ENCODE measurements at regions of chr20 and their contacts with region 1.

Region 1: GRCh38 chr20:47272893-47273590 is 83.5 kb downstream of the ZMYND8 start:
- DNase-seq: peak; percentile 7 to 57
- H3K4me3 ChIP-seq: no peak overlapping the region
- H3K27ac ChIP-seq: no peak overlapping the region
- H3K4me1 ChIP-seq: peaks cover 0 to 2% (median 0%) of the 10 kb centered on the region in 4 experiments; a peak in 1 of 7 replicates
- H3K27me3 ChIP-seq: no peaks in the 10 kb centered on the region
- CTCF ChIP-seq: peak in 2 of 3 experiments; percentile 72 to 80; a peak in 3 of 4 replicates
- EP300 ChIP-seq: no peak
- POLR2A ChIP-seq: no peak
- RAD21 ChIP-seq: peak; percentile 89 to 91

Region 2: DNA sequence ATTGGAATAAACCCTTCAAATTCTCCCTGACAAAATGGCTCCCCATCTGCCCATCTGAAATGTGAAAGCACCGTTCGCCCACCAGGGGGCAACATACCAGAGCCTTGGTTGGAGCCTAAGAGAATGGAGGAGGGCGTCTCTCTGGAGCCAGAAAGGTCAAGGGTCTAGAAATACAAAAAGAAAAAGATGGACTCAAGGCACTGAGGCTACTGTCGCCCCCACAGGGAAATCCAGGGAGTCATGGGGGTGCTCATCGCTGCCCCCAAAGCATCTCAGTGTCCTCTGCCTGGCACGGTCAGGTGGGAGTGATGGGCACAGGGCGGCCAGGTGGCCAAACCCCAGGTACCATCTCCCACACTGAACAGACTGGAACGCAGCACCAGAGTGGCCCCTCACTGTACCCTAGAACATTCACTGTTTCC is 52.9 kb before region 1 on chr20:
- CTCF ChIA-PET with region 1: interaction called, 11 read pairs
- POLR2A ChIA-PET with region 1: no interaction called
- DNase-seq: peak in 1 of 2 experiments; percentile 84
- H3K4me3 ChIP-seq: no peak overlapping the region
- H3K27ac ChIP-seq: no peak overlapping the region
- H3K4me1 ChIP-seq: no peaks in the 10 kb centered on the region
- H3K27me3 ChIP-seq: no peaks in the 10 kb centered on the region
- CTCF ChIP-seq: peak; percentile 61 to 74 (median 66)
- EP300 ChIP-seq: no peak
- POLR2A ChIP-seq: no peak
- RAD21 ChIP-seq: peak; percentile 26 to 48; a peak in 2 of 4 replicates

Region 3: GRCh38 chr20:47246061-47246777 is 26.8 kb before region 1 on chr20:
- CTCF ChIA-PET with region 1: interaction called, 14 read pairs
- POLR2A ChIA-PET with region 1: no interaction called
- DNase-seq: no peak
- H3K4me3 ChIP-seq: no peak overlapping the region
- H3K27ac ChIP-seq: no peak overlapping the region
- H3K4me1 ChIP-seq: no peaks in the 10 kb centered on the region
- H3K27me3 ChIP-seq: no peaks in the 10 kb centered on the region
- CTCF ChIP-seq: no peak
- EP300 ChIP-seq: no peak
- POLR2A ChIP-seq: no peak
- RAD21 ChIP-seq: no peak

Region 4: DNA sequence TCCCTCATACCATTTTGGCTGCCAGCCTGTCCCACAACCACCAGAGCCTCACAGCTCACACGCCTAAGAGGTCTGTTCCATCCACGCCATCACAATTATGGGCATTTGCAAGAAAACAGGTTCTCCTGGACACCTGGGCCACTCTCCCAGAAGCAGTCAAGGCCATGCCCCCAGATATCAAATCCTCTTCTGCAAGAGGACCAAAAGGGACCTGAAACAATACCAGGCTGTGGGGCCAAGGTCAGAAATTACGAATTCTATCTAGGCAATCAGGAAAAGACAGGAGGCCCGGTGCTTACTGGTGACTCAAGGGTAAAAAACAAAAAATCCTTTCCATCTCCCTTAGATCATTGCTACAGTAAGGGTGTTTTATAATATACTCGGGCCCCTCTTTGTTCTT is 13.6 kb after region 1 on chr20:
- CTCF ChIA-PET with region 1: interaction called, 58 read pairs
- POLR2A ChIA-PET with region 1: interaction called, 5 read pairs
- DNase-seq: no peak
- H3K4me3 ChIP-seq: no peak overlapping the region
- H3K27ac ChIP-seq: no peak overlapping the region
- H3K4me1 ChIP-seq: no peaks in the 10 kb centered on the region
- H3K27me3 ChIP-seq: no peaks in the 10 kb centered on the region
- CTCF ChIP-seq: no peak
- EP300 ChIP-seq: no peak
- POLR2A ChIP-seq: no peak
- RAD21 ChIP-seq: no peak

Region 5: DNA sequence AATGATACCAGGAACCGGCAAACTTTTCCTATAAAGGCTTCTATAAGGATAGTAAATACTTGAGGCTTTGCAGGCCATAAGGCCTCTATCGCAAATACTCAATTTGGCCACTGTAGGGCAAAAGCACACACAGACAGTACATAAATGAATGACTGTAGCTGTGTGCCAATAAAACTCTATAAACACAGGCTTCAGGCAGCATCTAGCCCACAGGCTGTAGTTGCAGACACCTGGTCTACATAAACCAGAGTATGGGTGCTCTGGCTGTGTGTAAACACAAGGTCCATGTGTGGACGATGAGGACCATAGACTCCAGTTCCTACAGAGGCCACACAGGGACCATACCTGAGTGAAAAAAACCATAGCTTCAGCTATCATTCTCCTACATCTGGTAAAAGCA is 31.2 kb after region 1 on chr20:
- CTCF ChIA-PET with region 1: interaction called, 13 read pairs
- POLR2A ChIA-PET with region 1: interaction called, 5 read pairs
- DNase-seq: no peak
- H3K4me3 ChIP-seq: no peak overlapping the region
- H3K27ac ChIP-seq: no peak overlapping the region
- H3K4me1 ChIP-seq: peaks cover 5 to 15% (median 10%) of the 10 kb centered on the region in 4 experiments
- H3K27me3 ChIP-seq: no peaks in the 10 kb centered on the region
- CTCF ChIP-seq: no peak
- EP300 ChIP-seq: no peak
- POLR2A ChIP-seq: no peak
- RAD21 ChIP-seq: no peak

Region 6: DNA sequence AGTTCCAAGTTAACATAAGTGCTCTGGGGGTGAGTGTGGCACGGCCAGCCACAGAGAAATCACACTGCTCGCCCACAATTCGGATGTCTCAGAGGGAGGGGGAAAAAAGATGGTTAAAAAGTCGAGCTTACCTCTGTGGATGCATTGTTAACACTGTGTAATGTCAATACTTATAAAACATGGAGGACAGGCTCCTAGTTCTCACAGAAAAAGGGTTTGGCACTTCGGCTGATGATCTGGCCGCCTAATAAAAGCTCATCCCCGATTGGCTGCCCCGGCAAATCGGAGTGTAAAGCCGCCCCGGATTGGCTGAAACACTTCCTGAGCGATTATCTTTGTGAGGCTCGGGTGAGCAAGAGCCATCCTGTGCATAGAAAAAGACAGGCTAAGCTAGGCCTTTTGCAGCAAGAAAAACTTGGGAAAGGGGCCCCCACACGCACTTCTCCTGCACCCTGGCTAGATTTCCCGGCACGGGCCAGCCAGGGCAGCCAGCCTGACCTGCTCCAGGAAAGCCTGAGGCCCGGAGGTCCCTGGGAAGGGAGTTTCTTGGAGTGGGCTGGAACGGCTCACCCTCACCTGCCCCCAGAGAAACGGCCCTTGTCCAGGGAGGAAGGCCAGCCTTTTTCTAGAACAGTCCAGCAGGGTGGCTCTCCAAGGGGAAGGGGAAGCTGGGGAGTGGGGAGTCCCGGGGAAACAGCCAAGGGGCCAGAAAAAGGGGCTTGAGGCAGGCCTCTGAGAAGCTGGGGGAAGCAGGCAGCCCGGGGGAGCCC is 83.7 kb after region 1 on chr20 and contains the start of gene ZMYND8:
- CTCF ChIA-PET with region 1: interaction called, 12 read pairs
- POLR2A ChIA-PET with region 1: interaction called, 7 read pairs
- DNase-seq: peak; percentile 70 to 98
- H3K4me3 ChIP-seq: peak within 1 kb of the TSS in 2 of 4 experiments; percentile 6 to 37; a peak in 5 of 8 replicates
- H3K27ac ChIP-seq: peak within 1 kb of the TSS; percentile 98
- H3K4me1 ChIP-seq: peaks cover 72 to 86% (median 79%) of the 10 kb centered on the region in 4 experiments
- H3K27me3 ChIP-seq: no peaks in the 10 kb centered on the region
- CTCF ChIP-seq: no peak
- EP300 ChIP-seq: no peak
- POLR2A ChIP-seq: no peak; a peak in 1 of 3 replicates
- RAD21 ChIP-seq: no peak
- total RNA-seq, gene ZMYND8: 163 TPM in 2 replicates

Region 7: DNA sequence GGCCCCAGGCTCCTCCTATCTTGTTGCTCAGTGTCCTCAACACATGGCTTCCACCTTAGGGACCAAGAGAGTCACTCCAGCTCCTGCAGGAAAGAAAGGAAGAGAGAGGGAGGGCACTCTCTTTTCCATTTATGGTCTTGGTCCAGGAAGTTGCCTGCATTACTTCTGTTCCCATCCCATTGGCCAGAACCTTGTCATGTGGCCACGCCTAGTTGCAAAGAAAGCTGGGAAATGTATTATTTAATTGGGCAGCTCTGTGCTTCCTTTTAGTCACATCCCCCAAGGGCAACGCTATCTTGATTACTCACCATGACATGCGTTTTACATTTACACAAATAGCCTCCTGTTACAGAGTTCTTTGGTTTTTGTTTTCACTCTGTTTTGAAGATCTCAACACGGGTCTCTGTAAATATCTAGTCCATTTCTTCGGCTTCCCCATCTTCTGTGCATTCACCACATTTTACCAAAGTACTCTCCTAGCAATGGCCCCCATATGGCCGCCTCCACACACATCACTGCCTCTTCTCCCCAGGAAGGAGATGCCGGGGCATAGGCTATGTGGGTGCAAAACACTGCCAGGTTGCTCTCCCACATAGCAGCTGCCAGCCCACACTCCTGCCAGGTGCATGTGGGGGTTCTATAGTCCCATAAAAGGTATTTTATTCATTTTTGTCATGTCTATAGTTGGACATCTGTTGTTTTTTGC is 119.1 kb after region 1 on chr20:
- CTCF ChIA-PET with region 1: interaction called, 17 read pairs
- POLR2A ChIA-PET with region 1: interaction called, 4 read pairs
- DNase-seq: no peak
- H3K4me3 ChIP-seq: no peak overlapping the region
- H3K27ac ChIP-seq: no peak overlapping the region
- H3K4me1 ChIP-seq: no peaks in the 10 kb centered on the region
- H3K27me3 ChIP-seq: no peaks in the 10 kb centered on the region
- CTCF ChIP-seq: no peak
- EP300 ChIP-seq: no peak
- POLR2A ChIP-seq: no peak
- RAD21 ChIP-seq: no peak

Measured in H1 (cell line).